Activated CD4-positive, alpha-beta memory T cell treated with anti-CD3 and anti-CD28 coated beads, Interleukin-2, amount 10 ng/mL, durations not matched to agents 7 days and 5 days (primary cell): ENCODE measurements at regions of chr2 and their contacts with region 1.

Region 1: GRCh38 chr2:39216346-39217191 is 27.2 kb downstream of the CDKL4 start:
- DNase-seq: peak; percentile 89
- H3K4me3 Mint-ChIP-seq: peak overlapping the region; percentile 45
- H3K27ac Mint-ChIP-seq: peak overlapping the region; percentile 95
- H3K4me1 Mint-ChIP-seq: peaks cover 74% of the 10 kb centered on the region
- H3K27me3 Mint-ChIP-seq: no peaks in the 10 kb centered on the region

Region 2: GRCh38 chr2:39141331-39142271 is 75.0 kb before region 1 on chr2:
- CTCF ChIA-PET with region 1: interaction called, 7 read pairs
- POLR2A ChIA-PET with region 1: interaction called, 238 read pairs
- DNase-seq: peak; percentile 71
- H3K4me3 Mint-ChIP-seq: no peak overlapping the region
- H3K27ac Mint-ChIP-seq: peak overlapping the region; percentile 93
- H3K4me1 Mint-ChIP-seq: peaks cover 72% of the 10 kb centered on the region
- H3K27me3 Mint-ChIP-seq: no peaks in the 10 kb centered on the region

Region 3: GRCh38 chr2:39202639-39203369 is 13.8 kb before region 1 on chr2:
- CTCF ChIA-PET with region 1: no interaction called
- POLR2A ChIA-PET with region 1: interaction called, 12 read pairs
- DNase-seq: no peak
- H3K4me3 Mint-ChIP-seq: no peak overlapping the region
- H3K27ac Mint-ChIP-seq: peak overlapping the region; percentile 38
- H3K4me1 Mint-ChIP-seq: peaks cover 26% of the 10 kb centered on the region
- H3K27me3 Mint-ChIP-seq: no peaks in the 10 kb centered on the region